Heart right ventricle (tissue), 16 donors: ENCODE measurements at regions of chr10 and their contacts with region 1.

Region 1: GRCh38 chr10:21265621-21266020 is 259.9 kb downstream of the SKIDA1 start:
- DNase-seq: no peak
- ATAC-seq: no peak
- H3K4me3 ChIP-seq: no peak overlapping the region
- H3K27ac ChIP-seq: no peak overlapping the region
- H3K4me1 ChIP-seq: peaks cover 0 to 4% (median 0%) of the 10 kb centered on the region in 9 donors
- H3K27me3 ChIP-seq: no peaks in the 10 kb centered on the region
- CTCF ChIP-seq: no peak

Region 2: DNA sequence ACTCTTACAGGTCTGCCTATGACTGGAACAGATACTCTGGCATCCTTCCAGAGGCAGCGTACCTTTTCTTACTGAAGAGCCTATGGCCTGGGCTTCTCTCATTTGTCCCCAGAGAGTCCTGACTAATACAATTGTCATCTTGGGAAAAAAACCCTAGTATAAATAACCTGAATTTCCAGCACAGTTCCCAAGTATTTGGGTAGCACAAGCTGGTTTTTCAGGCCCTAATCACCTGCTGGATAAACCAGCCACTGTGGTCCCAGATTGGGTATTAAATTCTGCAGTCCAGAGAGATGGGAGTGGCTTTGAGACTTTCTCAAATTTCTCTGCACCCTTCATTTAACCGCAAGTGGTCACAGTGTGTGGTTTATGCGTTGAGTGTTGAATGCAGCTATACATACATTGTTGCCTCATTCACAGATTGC is 181.7 kb before region 1 on chr10:
- intact Hi-C with region 1: loop called in 9 of 10 experiments (anchors 2 to 5 kb)
- DNase-seq: no peak
- ATAC-seq: no peak
- H3K4me3 ChIP-seq: no peak overlapping the region
- H3K27ac ChIP-seq: no peak overlapping the region
- H3K4me1 ChIP-seq: peaks cover 0 to 5% (median 0%) of the 10 kb centered on the region in 9 donors
- H3K27me3 ChIP-seq: no peaks in the 10 kb centered on the region
- CTCF ChIP-seq: no peak

Region 3: DNA sequence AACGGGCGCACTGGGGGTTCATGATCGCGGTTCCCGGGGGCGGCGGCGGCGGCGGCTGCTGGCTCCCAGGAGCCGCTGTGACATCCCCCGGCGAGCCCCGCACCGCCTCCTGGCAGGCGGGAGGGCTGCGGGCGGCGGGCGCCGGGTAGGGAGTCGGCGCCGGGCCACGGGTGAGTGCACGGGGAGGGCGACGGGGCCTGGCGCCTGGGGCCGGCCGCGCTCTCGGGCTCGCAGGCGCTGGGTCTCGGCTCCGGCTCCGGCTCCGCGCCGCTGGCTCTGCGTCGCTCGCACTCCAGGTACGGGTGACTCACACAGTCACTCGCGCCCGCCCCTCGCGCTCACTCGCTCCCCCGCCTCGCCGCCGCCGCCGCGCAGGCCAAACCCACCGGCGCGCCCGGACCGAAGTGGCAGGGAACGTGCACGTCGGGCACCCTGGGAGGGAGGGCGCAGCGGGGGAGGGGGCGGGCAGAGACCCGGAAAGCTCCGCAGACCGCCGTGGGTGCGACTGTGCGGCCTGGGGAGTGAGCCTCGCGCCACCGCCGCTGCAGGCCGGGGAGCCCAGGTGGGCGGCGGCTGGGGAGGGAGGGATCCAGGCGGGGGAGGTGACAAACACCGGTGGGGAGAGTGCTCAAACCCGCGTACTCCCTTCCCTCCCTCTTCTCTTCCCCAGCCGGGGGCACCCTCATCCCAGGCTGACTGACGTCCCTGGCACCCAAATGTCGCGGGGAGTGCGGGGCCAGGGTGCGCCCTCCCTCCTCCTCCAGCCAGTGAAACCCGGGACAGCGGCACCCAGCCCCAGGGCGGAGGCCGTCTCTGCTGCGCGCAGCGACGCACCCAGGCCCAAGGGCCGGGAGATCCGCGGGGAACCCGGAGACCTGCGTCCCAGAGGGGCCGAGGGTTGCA is 91.6 kb before region 1 on chr10:
- intact Hi-C with region 1: loop called in 1 of 10 experiments (anchors 10 kb)
- DNase-seq: peak; percentile 29 to 45
- ATAC-seq: peak; percentile 56 to 90 (median 76)
- H3K4me3 ChIP-seq: peak overlapping the region; percentile 54 to 68 (median 62)
- H3K27ac ChIP-seq: peak overlapping the region in 9 of 10 donors; percentile 35 to 78 (median 52)
- H3K4me1 ChIP-seq: peaks cover 0 to 12% (median 8%) of the 10 kb centered on the region in 9 donors
- H3K27me3 ChIP-seq: peaks cover 0 to 54% (median 17%) of the 10 kb centered on the region in 7 donors
- CTCF ChIP-seq: peak in 1 of 9 donors; percentile 5

Region 4: DNA sequence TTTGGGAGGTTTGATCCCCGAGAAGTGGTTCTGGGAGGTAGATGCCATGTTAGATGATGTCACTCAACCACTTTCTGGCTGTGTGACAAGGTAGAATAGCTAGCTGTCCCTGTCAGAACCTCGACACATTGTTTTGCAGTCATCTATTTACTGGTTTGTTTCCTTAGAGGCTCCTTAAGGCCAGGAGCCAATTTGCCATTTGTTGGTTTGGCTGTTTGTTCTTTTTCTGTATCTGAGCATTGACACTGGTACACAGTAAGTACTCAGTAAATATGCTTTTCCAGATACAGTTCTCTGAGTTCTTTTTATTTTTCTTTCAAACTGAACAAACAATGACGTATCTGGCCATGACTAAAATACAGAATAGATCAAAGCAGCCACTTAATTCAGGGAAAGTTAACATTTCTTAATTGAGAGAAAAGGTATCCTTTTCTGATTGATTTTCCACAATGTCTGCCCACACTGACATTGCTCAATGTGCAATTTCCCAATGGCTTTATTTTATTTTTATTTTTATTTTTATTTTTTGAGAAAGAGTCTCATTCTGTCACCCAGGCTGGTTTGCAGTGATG is 1201.2 kb after region 1 on chr10:
- intact Hi-C with region 1: no loop called
- DNase-seq: no peak
- ATAC-seq: no peak
- H3K4me3 ChIP-seq: no peak overlapping the region
- H3K27ac ChIP-seq: no peak overlapping the region
- H3K4me1 ChIP-seq: no peaks in the 10 kb centered on the region
- H3K27me3 ChIP-seq: peaks cover 0 to 27% (median 18%) of the 10 kb centered on the region in 7 donors
- CTCF ChIP-seq: no peak